Activated CD8-positive, alpha-beta T cell treated with anti-CD3 and anti-CD28 coated beads for 36 hours (primary cell): ENCODE measurements at regions of chr1 and their contacts with region 1.

Region 1: GRCh38 chr1:28235755-28236655 is at the start of gene ATP5IF1:
- DNase-seq: peak; percentile 98
- ATAC-seq: peak; percentile 95
- H3K4me3 Mint-ChIP-seq: no peak within 1 kb of the TSS
- H3K27ac Mint-ChIP-seq: no peak within 1 kb of the TSS
- H3K4me1 Mint-ChIP-seq: peaks cover 14% of the 10 kb centered on the region
- H3K27me3 Mint-ChIP-seq: no peaks in the 10 kb centered on the region
- CTCF ChIP-seq: no peak
- total RNA-seq, gene ATP5IF1: 169 to 170 TPM

Region 2: GRCh38 chr1:28510665-28511440 is 274.8 kb after region 1 on chr1:
- CTCF ChIA-PET with region 1: no interaction called
- POLR2A ChIA-PET with region 1: interaction called, 19 read pairs
- intact Hi-C with region 1: no loop called
- DNase-seq: peak; percentile 33
- ATAC-seq: peak; percentile 5
- H3K4me3 Mint-ChIP-seq: peak overlapping the region; percentile 94
- H3K27ac Mint-ChIP-seq: peak overlapping the region; percentile 95
- H3K4me1 Mint-ChIP-seq: peaks cover 33% of the 10 kb centered on the region
- H3K27me3 Mint-ChIP-seq: peaks cover 1% of the 10 kb centered on the region
- CTCF ChIP-seq: no peak